ENCODE measurements at regions of chr7 and their contacts with region 1.

Region 1: DNA sequence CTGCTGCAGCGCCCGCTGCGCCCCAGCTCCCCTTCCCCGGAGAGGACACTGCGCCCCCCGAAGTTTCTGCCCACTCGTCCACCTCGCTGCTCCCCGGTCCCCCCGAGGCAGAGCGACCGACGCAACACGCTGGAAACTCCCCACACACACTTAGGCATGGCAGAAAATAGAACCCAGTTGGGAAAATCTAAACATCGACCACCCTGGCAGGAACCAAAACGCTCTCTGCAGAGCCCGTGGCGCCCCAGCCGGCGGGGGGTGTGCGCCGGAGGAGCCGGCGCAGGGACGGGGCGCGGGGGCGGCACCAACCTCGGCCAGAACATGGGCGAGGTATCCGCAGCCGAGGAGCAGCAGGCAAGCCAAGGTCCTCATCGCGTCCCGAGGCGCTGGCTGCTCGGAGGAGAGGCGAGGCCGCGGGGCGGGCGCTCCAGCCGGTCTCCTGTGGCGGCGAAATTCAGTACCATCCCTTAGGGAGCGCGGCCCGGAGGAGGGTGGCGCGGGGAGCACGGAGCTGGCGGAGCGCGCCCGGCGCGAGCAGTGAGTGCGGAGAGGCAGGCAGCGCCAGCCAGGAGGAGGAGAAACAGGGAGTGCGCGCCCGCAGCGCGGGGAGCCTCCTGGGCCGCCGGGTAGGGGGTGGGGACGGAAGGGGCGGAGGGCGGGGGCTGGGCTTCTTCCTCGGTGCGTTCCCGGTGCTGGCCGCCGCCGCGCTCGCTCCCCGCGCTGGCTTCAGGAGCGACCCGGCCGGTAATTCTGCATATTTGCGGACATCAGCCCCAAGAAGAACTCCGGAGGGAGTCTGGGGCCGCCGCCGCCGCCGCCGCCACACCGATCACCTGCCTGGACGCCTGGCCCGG is 789 bp downstream of the PDGFA start:
- DNase-seq: peak; percentile 89
- H3K4me3 ChIP-seq: peak overlapping the region; percentile 78
- H3K27ac ChIP-seq: peak overlapping the region; percentile 97
- H3K4me1 ChIP-seq: peaks cover 24% of the 10 kb centered on the region
- H3K27me3 ChIP-seq: peaks cover 29% of the 10 kb centered on the region
- CTCF ChIP-seq: no peak

Region 2: DNA sequence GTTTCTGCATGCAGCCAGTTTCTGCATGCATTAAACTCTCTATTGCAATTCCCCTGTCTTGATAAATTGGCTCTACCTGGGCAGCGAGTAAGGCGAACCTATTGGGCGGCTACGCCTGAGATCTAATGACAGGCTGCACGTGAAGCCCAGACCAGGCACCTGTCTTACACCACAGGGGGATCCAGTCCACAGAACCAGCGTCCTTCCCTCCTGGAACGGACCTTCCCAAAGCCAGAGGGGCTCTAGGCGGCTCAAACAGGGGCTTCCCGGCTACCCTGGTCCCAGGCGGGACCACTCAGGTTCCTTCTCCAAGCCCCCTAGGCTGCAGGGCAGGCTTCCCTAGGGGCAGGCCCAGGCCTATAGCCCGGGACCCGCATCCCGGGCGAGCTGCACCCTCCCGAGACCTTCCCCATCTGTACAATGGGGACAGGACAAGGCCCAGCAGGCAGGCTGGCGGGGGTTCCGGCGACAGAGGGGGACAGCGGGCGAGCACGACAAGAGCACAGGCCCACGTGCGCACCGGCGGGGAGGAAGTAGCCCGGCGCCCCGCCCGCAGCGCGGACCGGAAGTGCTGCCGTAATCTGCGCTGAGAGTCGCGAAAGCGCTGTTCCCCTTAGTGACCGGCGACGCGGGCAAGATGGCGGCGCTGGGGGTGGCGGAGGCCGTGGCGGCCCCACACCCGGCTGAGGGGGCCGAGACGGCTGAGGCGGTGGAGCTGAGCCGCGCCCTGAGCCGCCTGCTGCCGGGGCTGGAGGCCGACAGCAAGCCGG is 207.4 kb after region 1 on chr7 and contains the start of gene DNAAF5:
- intact Hi-C with region 1: loop called (anchors 10 kb)
- DNase-seq: peak; percentile 88
- H3K4me3 ChIP-seq: peak within 1 kb of the TSS; percentile 87
- H3K27ac ChIP-seq: no peak within 1 kb of the TSS
- H3K4me1 ChIP-seq: peaks cover 6% of the 10 kb centered on the region
- H3K27me3 ChIP-seq: no peaks in the 10 kb centered on the region
- CTCF ChIP-seq: no peak
- total RNA-seq, gene DNAAF5: 31.0 to 54.9 TPM

Measured in colonic mucosa (tissue), 4 donors.